ENCODE measurements at regions of chr10 and their contacts with region 1.

Region 1: GRCh38 chr10:22436884-22437619 is 91.8 kb downstream of the SPAG6 start:
- DNase-seq: peak; percentile 89
- H3K4me3 Mint-ChIP-seq: peak overlapping the region; percentile 88
- H3K27ac Mint-ChIP-seq: peak overlapping the region; percentile 91
- H3K4me1 Mint-ChIP-seq: peaks cover 50% of the 10 kb centered on the region
- H3K27me3 Mint-ChIP-seq: no peaks in the 10 kb centered on the region

Region 2: GRCh38 chr10:21516242-21517131 is 920.6 kb before region 1 on chr10:
- CTCF ChIA-PET with region 1: no interaction called
- POLR2A ChIA-PET with region 1: no interaction called
- intact Hi-C with region 1: loop called (anchors 10 kb)
- DNase-seq: peak; percentile 60
- H3K4me3 Mint-ChIP-seq: peak overlapping the region; percentile 84
- H3K27ac Mint-ChIP-seq: no peak overlapping the region
- H3K4me1 Mint-ChIP-seq: peaks cover 34% of the 10 kb centered on the region
- H3K27me3 Mint-ChIP-seq: peaks cover 73% of the 10 kb centered on the region

Region 3: GRCh38 chr10:22148961-22149360 is 288.1 kb before region 1 on chr10:
- CTCF ChIA-PET with region 1: no interaction called
- POLR2A ChIA-PET with region 1: no interaction called
- intact Hi-C with region 1: no loop called
- DNase-seq: no peak
- H3K4me3 Mint-ChIP-seq: no peak overlapping the region
- H3K27ac Mint-ChIP-seq: no peak overlapping the region
- H3K4me1 Mint-ChIP-seq: no peaks in the 10 kb centered on the region
- H3K27me3 Mint-ChIP-seq: peaks cover 15% of the 10 kb centered on the region

Region 4: DNA sequence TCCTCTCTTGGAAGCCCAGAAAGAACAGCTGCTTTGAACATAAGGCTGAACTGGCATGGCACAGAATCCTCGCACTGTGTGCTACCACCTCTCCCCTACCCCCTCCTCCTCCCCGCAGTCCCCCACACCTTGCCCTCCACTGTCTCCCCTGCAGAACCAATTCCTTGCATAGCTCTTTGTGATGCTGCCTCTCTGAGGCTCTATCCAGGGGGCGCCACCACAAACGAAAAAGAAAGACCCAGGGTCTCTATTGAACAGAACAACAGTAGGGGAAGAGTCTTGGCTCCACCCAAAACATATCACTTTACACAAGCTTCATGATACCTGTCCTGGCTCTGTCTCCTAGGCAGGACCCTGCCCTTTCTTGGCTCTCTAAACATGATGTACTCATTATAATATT is 193.1 kb before region 1 on chr10:
- CTCF ChIA-PET with region 1: no interaction called
- POLR2A ChIA-PET with region 1: no interaction called
- intact Hi-C with region 1: loop called (anchors 2 kb)
- DNase-seq: peak; percentile 17
- H3K4me3 Mint-ChIP-seq: no peak overlapping the region
- H3K27ac Mint-ChIP-seq: no peak overlapping the region
- H3K4me1 Mint-ChIP-seq: peaks cover 39% of the 10 kb centered on the region
- H3K27me3 Mint-ChIP-seq: peaks cover 4% of the 10 kb centered on the region

Region 5: DNA sequence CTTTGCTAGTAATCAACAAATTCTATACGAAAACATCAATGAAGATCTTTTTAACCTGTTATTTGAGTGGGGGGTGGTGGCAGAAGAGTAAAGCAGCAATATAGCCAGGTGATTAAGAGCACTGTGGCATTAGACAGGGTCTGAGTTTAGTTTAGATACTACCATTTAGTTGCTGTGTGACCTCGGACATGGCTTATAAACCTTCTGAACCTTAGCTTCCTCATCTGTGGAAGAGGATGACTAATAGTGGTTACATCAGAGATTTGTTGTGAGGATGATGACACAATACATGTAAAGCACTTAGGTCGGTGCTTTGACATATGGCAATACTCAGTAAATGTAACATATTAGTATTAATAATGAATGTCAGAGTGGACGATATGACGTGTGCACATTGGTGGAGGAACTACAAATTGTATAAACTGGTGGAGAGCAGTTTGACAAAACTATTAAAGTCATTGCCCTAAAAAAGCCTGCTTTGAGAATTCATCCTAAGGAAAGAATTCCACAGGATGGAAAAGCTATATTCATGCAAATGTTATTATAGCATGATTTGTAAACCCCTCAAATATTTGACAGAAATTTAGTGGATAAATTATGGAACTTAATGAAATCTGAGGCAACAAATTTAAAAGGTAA is 67.5 kb before region 1 on chr10:
- CTCF ChIA-PET with region 1: no interaction called
- POLR2A ChIA-PET with region 1: no interaction called
- intact Hi-C with region 1: loop called (anchors 5 kb)
- DNase-seq: no peak
- H3K4me3 Mint-ChIP-seq: no peak overlapping the region
- H3K27ac Mint-ChIP-seq: no peak overlapping the region
- H3K4me1 Mint-ChIP-seq: peaks cover 19% of the 10 kb centered on the region
- H3K27me3 Mint-ChIP-seq: peaks cover 4% of the 10 kb centered on the region

Region 6: DNA sequence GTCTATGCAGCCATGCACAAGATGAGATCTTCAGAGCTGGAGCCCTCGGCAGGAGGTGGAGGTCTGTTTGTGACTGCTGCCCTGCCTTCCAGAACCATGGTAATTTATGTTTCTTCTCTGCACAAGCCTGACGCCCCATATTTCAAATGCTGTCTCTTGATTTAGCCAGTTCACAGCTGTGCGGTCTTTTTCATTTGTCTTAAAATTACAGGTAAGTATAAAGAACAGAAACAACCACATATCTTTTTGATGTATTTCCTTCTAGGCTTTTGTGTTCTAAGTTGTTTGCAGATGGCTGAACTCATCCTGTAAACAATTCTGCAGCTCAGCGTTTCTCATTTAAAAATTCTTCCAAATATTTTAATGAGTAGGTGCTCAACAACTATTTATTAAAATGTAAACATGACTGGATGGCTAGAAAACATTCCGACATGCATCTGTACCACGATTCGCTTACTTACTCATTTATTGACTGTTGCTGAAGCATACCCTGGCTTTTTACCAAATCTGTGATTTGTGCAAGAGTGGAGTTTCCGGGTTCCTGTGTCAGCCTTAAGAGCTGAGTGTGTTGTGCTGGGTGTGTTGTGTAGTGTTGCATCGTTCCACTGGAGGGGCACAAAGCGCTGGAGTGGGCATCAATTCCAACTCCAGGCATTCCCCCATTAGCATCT is 218.4 kb after region 1 on chr10:
- CTCF ChIA-PET with region 1: no interaction called
- POLR2A ChIA-PET with region 1: no interaction called
- intact Hi-C with region 1: loop called (anchors 10 kb)
- DNase-seq: peak; percentile 63
- H3K4me3 Mint-ChIP-seq: peak overlapping the region; percentile 60
- H3K27ac Mint-ChIP-seq: peak overlapping the region; percentile 84
- H3K4me1 Mint-ChIP-seq: peaks cover 95% of the 10 kb centered on the region
- H3K27me3 Mint-ChIP-seq: no peaks in the 10 kb centered on the region

Measured in activated CD4-positive, alpha-beta memory T cell treated with anti-CD3 and anti-CD28 coated beads for 36 hours (primary cell).